Endothelial cell of umbilical vein (primary cell): ENCODE measurements at regions of chr4 and their contacts with region 1.

Region 1: DNA sequence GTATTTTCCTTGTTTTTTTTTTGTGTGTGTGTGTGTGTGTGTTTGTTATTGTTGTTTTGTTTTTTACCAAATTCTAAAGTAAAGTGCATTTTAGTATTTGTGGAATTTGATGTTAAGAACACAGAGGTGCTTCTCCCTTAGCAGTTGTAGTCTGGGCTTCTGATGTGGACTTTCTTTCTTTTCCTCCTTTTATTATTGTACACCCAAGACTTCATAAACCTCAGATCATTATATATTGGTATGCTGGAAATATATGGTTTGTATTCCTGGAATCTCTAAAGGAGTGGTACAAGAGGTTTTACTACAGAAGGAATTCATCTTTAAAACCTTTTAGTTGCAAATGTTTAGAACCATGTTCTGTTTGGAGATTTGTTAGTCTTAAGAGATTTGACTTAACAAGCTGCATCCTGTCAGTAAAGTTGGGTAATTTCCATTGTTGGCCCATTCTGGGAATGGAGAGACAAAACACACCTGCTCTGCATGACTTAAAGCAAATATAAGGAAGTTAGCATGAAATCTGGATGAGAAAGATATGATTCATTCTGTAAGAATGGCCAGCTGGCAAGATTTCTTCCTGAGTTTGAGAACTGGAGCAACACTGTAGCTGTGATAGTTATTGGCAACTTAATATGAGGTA is 64.0 kb downstream of the SMAD1 start:
- DNase-seq: peak; percentile 100
- H3K4me3 ChIP-seq: peak overlapping the region in 1 of 3 experiments; percentile 58
- H3K27ac ChIP-seq: peak overlapping the region; percentile 98
- H3K4me1 ChIP-seq: peaks cover 43% of the 10 kb centered on the region
- H3K27me3 ChIP-seq: no peaks in the 10 kb centered on the region
- CTCF ChIP-seq: no peak
- POLR2A ChIP-seq: peak; percentile 73

Region 2: DNA sequence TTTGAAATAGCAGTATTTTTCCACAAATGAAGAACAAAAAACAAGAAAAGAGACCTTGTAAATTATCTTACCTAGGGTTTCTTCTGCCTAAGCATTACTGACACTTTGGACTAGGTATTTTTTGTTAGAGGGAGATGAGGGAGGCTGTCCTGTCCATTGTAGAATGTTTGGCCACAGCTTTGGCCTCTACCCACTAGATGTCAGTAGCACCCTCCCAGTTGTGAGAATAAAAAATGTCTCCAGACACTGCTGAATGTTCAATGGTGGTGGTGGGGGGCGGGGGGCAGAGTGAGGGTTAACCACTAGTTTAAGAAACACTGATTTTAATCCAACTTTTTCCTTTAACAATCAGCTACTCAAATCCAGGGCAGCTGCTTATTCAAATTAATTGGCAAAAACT is 391.1 kb before region 1 on chr4:
- CTCF ChIA-PET with region 1: no interaction called
- POLR2A ChIA-PET with region 1: no interaction called
- dilution Hi-C with region 1: no loop called
- intact Hi-C with region 1: loop called (anchors 5 kb)
- DNase-seq: peak; percentile 73
- H3K4me3 ChIP-seq: no peak overlapping the region
- H3K27ac ChIP-seq: peak overlapping the region; percentile 46
- H3K4me1 ChIP-seq: peaks cover 28% of the 10 kb centered on the region
- H3K27me3 ChIP-seq: no peaks in the 10 kb centered on the region
- CTCF ChIP-seq: peak; percentile 53 to 66
- POLR2A ChIP-seq: no peak

Region 3: DNA sequence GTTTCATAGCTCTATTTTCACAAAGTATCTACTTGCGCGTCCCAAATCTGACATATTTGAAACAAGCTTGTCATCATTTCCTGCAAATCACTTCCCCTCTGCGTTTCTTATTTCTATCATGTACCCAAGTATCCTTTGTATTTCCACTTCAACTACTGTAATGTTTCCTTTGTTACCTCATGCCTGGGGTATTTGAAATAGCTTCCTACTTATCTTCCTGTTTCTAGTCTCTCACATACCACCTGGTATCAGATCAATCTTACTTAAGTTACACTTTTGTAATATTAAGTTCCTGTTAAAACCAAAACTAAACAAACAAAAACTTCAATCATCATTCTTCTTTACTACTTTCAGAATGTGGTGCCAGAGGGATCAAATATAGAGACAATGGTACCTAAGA is 157.6 kb before region 1 on chr4:
- CTCF ChIA-PET with region 1: no interaction called
- POLR2A ChIA-PET with region 1: no interaction called
- dilution Hi-C with region 1: no loop called
- intact Hi-C with region 1: loop called (anchors 1 kb)
- DNase-seq: peak; percentile 80
- H3K4me3 ChIP-seq: peak overlapping the region in 1 of 3 experiments; percentile 32
- H3K27ac ChIP-seq: peak overlapping the region; percentile 67
- H3K4me1 ChIP-seq: peaks cover 25% of the 10 kb centered on the region
- H3K27me3 ChIP-seq: no peaks in the 10 kb centered on the region
- CTCF ChIP-seq: no peak
- POLR2A ChIP-seq: no peak

Region 4: GRCh38 chr4:145501051-145501660 is 44.5 kb before region 1 on chr4:
- CTCF ChIA-PET with region 1: interaction called, 6 read pairs
- POLR2A ChIA-PET with region 1: interaction called, 3 read pairs
- dilution Hi-C with region 1: no loop called
- intact Hi-C with region 1: loop called (anchors 1 kb)
- DNase-seq: peak; percentile 91
- H3K4me3 ChIP-seq: no peak overlapping the region
- H3K27ac ChIP-seq: peak overlapping the region; percentile 27
- H3K4me1 ChIP-seq: peaks cover 54% of the 10 kb centered on the region
- H3K27me3 ChIP-seq: no peaks in the 10 kb centered on the region
- CTCF ChIP-seq: no peak
- POLR2A ChIP-seq: no peak

Region 5: GRCh38 chr4:145557720-145558119 is 12.1 kb after region 1 on chr4:
- CTCF ChIA-PET with region 1: interaction called, 24 read pairs
- POLR2A ChIA-PET with region 1: interaction called, 4 read pairs
- dilution Hi-C with region 1: no loop called
- intact Hi-C with region 1: loop called (anchors 1 kb)
- DNase-seq: peak; percentile 81
- H3K4me3 ChIP-seq: no peak overlapping the region
- H3K27ac ChIP-seq: no peak overlapping the region
- H3K4me1 ChIP-seq: peaks cover 11% of the 10 kb centered on the region
- H3K27me3 ChIP-seq: no peaks in the 10 kb centered on the region
- CTCF ChIP-seq: peak; percentile 88 to 89
- POLR2A ChIP-seq: no peak

Region 6: GRCh38 chr4:146709956-146710355 is 1164.3 kb after region 1 on chr4:
- CTCF ChIA-PET with region 1: no interaction called
- POLR2A ChIA-PET with region 1: no interaction called
- dilution Hi-C with region 1: no loop called
- intact Hi-C with region 1: no loop called
- DNase-seq: no peak
- H3K4me3 ChIP-seq: no peak overlapping the region
- H3K27ac ChIP-seq: no peak overlapping the region
- H3K4me1 ChIP-seq: no peaks in the 10 kb centered on the region
- H3K27me3 ChIP-seq: peaks cover 0 to 2% of the 10 kb centered on the region in 2 experiments
- CTCF ChIP-seq: no peak
- POLR2A ChIP-seq: no peak